Activated CD4-positive, alpha-beta T cell treated with anti-CD3 and anti-CD28 coated beads for 36 hours (primary cell): ENCODE measurements at regions of chr5 and their contacts with region 1.

Region 1: GRCh38 chr5:172479044-172479783 is 24.9 kb upstream of the SH3PXD2B start:
- DNase-seq: peak; percentile 81
- ATAC-seq: peak; percentile 98
- H3K4me3 Mint-ChIP-seq: no peak overlapping the region
- H3K27ac Mint-ChIP-seq: no peak overlapping the region
- H3K4me1 Mint-ChIP-seq: no peaks in the 10 kb centered on the region
- H3K27me3 Mint-ChIP-seq: peaks cover 2% of the 10 kb centered on the region

Region 2: GRCh38 chr5:172640822-172641358 is 161.7 kb after region 1 on chr5 and contains the start of gene NEURL1B:
- CTCF ChIA-PET with region 1: no interaction called
- POLR2A ChIA-PET with region 1: no interaction called
- intact Hi-C with region 1: loop called in 1 of 2 experiments (anchors 5 kb)
- DNase-seq: peak; percentile 75
- ATAC-seq: peak; percentile 86
- H3K4me3 Mint-ChIP-seq: no peak within 1 kb of the TSS
- H3K27ac Mint-ChIP-seq: no peak within 1 kb of the TSS
- H3K4me1 Mint-ChIP-seq: no peaks in the 10 kb centered on the region
- H3K27me3 Mint-ChIP-seq: peaks cover 38% of the 10 kb centered on the region
- total RNA-seq, gene NEURL1B: 0.16 to 0.19 TPM

Region 3: GRCh38 chr5:172932313-172933017 is 453.3 kb after region 1 on chr5:
- CTCF ChIA-PET with region 1: no interaction called
- POLR2A ChIA-PET with region 1: no interaction called
- intact Hi-C with region 1: loop called in 1 of 2 experiments (anchors 5 kb)
- DNase-seq: peak; percentile 88
- ATAC-seq: peak; percentile 97
- H3K4me3 Mint-ChIP-seq: no peak overlapping the region
- H3K27ac Mint-ChIP-seq: no peak overlapping the region
- H3K4me1 Mint-ChIP-seq: peaks cover 4% of the 10 kb centered on the region
- H3K27me3 Mint-ChIP-seq: no peaks in the 10 kb centered on the region